Activated CD4-positive, alpha-beta T cell treated with anti-CD3 and anti-CD28 coated beads for 36 hours (primary cell): ENCODE measurements at regions of chr16 and their contacts with region 1.

Region 1: DNA sequence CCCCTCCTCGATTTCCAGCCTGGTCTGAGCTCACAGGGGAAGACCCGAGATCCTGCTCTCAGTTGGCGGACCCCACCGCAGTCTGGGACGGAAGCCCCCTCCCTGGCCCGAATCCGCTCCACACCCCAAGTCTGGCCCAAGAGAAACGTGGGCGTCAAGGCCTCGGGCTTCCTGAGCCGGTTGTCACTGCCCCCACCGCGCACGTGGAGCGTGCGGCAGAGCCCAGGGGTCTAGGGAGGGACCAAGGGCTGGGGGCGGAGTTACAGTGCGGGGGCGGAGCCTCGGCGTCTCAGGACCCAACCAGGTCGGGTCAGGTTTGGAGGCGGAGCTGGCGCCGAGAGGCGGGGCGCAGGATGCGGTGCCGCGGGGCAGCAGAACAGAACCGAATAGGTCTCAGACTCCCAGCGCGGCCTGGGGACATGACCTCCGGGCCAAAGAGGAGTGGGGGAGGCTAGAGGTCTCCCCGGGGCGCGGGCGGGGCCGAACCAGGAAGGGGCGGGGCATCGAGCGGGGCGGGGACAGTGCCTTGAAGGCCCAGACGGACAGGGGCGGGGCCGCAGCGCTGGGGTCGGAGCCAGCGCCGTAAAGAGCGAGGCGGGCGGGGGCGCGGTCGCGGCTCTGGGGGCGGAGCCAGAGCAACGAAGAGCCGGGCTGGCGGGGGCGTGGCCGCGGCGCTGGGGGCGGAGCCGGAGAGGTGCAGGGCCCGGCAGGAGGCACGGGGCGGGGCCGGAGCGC is 431 bp upstream of the ZFPM1 start:
- DNase-seq: peak; percentile 100
- ATAC-seq: peak; percentile 68
- H3K4me3 Mint-ChIP-seq: peak overlapping the region; percentile 74
- H3K27ac Mint-ChIP-seq: peak overlapping the region; percentile 78
- H3K4me1 Mint-ChIP-seq: peaks cover 24% of the 10 kb centered on the region
- H3K27me3 Mint-ChIP-seq: no peaks in the 10 kb centered on the region

Region 2: GRCh38 chr16:87765776-87766484 is 686.7 kb before region 1 on chr16 and contains the start of gene KLHDC4:
- CTCF ChIA-PET with region 1: no interaction called
- POLR2A ChIA-PET with region 1: no interaction called
- intact Hi-C with region 1: loop called in 1 of 2 experiments (anchors 5 kb)
- DNase-seq: peak; percentile 94
- ATAC-seq: peak; percentile 88
- H3K4me3 Mint-ChIP-seq: peak within 1 kb of the TSS; percentile 100
- H3K27ac Mint-ChIP-seq: peak within 1 kb of the TSS; percentile 99
- H3K4me1 Mint-ChIP-seq: peaks cover 35% of the 10 kb centered on the region
- H3K27me3 Mint-ChIP-seq: no peaks in the 10 kb centered on the region
- total RNA-seq, gene KLHDC4: 67.0 to 77.3 TPM

Region 3: GRCh38 chr16:88533932-88534732 is 81.5 kb after region 1 on chr16:
- CTCF ChIA-PET with region 1: no interaction called
- POLR2A ChIA-PET with region 1: interaction called, 3 read pairs
- intact Hi-C with region 1: loop called in 1 of 2 experiments (anchors 1 kb)
- DNase-seq: peak; percentile 89
- ATAC-seq: peak; percentile 78
- H3K4me3 Mint-ChIP-seq: peak overlapping the region; percentile 74
- H3K27ac Mint-ChIP-seq: no peak overlapping the region
- H3K4me1 Mint-ChIP-seq: peaks cover 7% of the 10 kb centered on the region
- H3K27me3 Mint-ChIP-seq: peaks cover 4% of the 10 kb centered on the region

Region 4: GRCh38 chr16:88700636-88701482 is 248.2 kb after region 1 on chr16:
- CTCF ChIA-PET with region 1: no interaction called
- POLR2A ChIA-PET with region 1: no interaction called
- intact Hi-C with region 1: loop called in 1 of 2 experiments (anchors 1 kb)
- DNase-seq: peak; percentile 98
- ATAC-seq: peak; percentile 80
- H3K4me3 Mint-ChIP-seq: peak overlapping the region; percentile 92
- H3K27ac Mint-ChIP-seq: peak overlapping the region; percentile 97
- H3K4me1 Mint-ChIP-seq: peaks cover 55% of the 10 kb centered on the region
- H3K27me3 Mint-ChIP-seq: no peaks in the 10 kb centered on the region

Region 5: DNA sequence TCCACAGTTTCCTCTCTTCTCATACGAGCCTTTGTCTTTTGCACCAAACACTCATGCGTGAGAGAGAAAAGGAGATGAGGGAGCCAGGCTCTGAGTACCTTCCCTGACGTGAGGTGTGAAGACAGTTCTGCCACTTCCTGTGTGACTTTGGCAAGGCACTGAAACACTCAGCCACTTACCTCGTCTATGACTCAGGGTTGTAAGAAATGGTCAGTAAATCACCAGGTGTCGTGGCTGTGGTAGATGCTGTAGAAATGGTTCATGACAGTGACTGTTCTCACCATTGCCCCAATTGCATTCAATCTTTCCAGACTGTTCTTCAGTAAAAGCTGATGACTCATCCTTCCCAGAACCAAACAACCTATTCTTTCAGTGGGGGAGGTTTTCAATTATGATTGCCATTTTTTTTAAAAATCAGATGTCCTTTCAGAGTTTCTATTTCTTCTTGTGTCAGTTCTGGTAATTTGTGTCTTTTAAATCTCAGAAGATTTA is 573.5 kb after region 1 on chr16:
- CTCF ChIA-PET with region 1: no interaction called
- POLR2A ChIA-PET with region 1: no interaction called
- intact Hi-C with region 1: loop called in 1 of 2 experiments (anchors 1 kb)
- DNase-seq: peak; percentile 82
- ATAC-seq: peak; percentile 99
- H3K4me3 Mint-ChIP-seq: no peak overlapping the region
- H3K27ac Mint-ChIP-seq: peak overlapping the region; percentile 90
- H3K4me1 Mint-ChIP-seq: peaks cover 24% of the 10 kb centered on the region
- H3K27me3 Mint-ChIP-seq: peaks cover 3% of the 10 kb centered on the region

Region 6: GRCh38 chr16:89560378-89561141 is 1107.9 kb after region 1 on chr16 and contains the start of gene RPL13:
- CTCF ChIA-PET with region 1: no interaction called
- POLR2A ChIA-PET with region 1: no interaction called
- intact Hi-C with region 1: loop called in 1 of 2 experiments (anchors 2 kb)
- DNase-seq: peak; percentile 97
- ATAC-seq: peak; percentile 90
- H3K4me3 Mint-ChIP-seq: peak within 1 kb of the TSS; percentile 95
- H3K27ac Mint-ChIP-seq: peak within 1 kb of the TSS; percentile 99
- H3K4me1 Mint-ChIP-seq: peaks cover 46% of the 10 kb centered on the region
- H3K27me3 Mint-ChIP-seq: no peaks in the 10 kb centered on the region
- total RNA-seq, gene RPL13: 2,518 to 3,038 TPM